A673 (cell line): ENCODE measurements at regions of chr1 and their contacts with region 1.

Region 1: DNA sequence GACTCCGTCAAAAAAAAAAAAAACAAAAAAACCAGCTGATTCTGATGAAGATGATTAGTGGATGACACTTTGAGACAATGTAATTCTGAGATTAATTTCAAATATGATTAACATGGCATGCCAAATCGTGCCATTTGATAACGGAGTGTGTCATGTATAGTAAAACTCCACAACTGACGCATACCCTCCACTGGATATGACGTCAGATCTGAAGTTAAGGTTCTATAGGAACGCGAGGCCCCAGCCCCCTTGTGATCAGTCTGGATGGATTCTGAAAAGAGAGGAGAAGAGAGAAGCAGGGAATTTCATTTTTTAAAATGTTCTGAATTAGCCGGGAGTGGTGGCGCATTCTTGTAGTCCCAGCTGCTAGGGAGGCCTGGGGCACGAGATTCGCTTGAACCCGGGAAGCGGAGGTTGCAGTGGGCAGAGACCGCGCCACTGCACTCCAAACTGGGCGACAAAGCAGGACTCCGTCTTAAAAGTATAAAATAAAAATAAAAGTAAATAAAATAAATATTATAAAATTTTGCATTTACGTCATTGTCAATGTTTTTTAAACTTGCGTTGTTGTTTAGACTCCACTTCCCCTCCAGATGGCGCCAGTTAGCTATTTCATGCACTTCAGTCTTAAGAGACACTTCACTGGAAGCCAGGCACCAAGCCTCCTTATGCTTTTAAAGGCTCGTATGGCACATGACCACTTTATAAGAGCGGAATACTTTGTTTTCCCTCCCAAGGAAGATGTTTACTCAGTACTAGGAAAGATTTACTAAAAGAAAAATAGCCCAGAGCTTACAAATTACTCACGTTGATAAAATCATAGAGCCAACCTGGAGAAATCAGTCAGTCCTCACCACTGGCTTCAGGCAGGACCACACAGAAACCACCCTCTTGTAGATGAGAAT is 65.5 kb downstream of the UBE2U start:
- DNase-seq: peak; percentile 95
- H3K4me3 ChIP-seq: no peak overlapping the region
- H3K27ac ChIP-seq: peak overlapping the region; percentile 82
- H3K4me1 ChIP-seq: peaks cover 34% of the 10 kb centered on the region
- H3K27me3 ChIP-seq: no peaks in the 10 kb centered on the region
- CTCF ChIP-seq: peak; percentile 76

Region 2: DNA sequence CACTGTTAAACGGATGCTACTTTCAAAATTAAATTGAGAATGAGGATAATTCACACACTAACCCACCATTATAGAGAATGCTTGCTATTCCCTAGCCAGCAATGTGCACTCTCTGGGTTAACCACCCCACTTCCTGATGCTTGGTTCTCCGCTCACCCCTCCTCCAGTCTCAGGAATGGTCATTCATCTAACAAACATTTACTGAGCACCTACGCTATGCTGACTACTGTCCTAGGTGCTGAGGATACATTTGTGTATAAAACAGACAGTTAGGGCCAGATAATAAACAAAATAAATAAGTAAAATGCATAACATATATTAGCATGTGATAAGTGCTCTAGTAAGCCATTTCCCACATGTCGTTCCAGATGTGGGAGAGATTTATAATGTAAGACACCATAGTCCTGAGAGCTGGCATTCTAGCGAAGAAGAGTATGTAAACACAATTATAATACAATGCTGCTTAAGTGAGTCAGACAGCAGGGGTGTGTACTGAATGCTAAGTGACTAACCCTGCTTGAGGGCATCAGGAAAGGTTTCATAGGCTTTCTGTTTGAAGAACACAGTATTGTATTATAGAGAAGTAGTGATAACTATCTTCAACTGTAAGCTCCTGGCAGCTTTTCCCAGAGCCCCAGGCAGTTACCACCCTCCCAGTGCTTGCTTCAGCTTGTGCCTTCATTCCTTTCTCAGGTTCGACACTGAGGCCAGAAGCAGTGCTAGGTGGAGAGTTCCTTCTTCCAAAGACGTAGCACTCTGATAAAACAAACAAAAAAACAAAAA is 74.4 kb after region 1 on chr1:
- CTCF ChIA-PET with region 1: interaction called, 16 read pairs
- POLR2A ChIA-PET with region 1: no interaction called
- intact Hi-C with region 1: no loop called
- DNase-seq: peak; percentile 80
- H3K4me3 ChIP-seq: no peak overlapping the region
- H3K27ac ChIP-seq: peak overlapping the region; percentile 24
- H3K4me1 ChIP-seq: peaks cover 38% of the 10 kb centered on the region
- H3K27me3 ChIP-seq: no peaks in the 10 kb centered on the region
- CTCF ChIP-seq: no peak

Region 3: GRCh38 chr1:64487061-64487460 is 218.2 kb after region 1 on chr1:
- CTCF ChIA-PET with region 1: no interaction called
- POLR2A ChIA-PET with region 1: no interaction called
- intact Hi-C with region 1: loop called (anchors 10 kb)
- DNase-seq: no peak
- H3K4me3 ChIP-seq: no peak overlapping the region
- H3K27ac ChIP-seq: no peak overlapping the region
- H3K4me1 ChIP-seq: peaks cover 67% of the 10 kb centered on the region
- H3K27me3 ChIP-seq: no peaks in the 10 kb centered on the region
- CTCF ChIP-seq: peak; percentile 44; the same call in 1 of the 2 replicates

Region 4: DNA sequence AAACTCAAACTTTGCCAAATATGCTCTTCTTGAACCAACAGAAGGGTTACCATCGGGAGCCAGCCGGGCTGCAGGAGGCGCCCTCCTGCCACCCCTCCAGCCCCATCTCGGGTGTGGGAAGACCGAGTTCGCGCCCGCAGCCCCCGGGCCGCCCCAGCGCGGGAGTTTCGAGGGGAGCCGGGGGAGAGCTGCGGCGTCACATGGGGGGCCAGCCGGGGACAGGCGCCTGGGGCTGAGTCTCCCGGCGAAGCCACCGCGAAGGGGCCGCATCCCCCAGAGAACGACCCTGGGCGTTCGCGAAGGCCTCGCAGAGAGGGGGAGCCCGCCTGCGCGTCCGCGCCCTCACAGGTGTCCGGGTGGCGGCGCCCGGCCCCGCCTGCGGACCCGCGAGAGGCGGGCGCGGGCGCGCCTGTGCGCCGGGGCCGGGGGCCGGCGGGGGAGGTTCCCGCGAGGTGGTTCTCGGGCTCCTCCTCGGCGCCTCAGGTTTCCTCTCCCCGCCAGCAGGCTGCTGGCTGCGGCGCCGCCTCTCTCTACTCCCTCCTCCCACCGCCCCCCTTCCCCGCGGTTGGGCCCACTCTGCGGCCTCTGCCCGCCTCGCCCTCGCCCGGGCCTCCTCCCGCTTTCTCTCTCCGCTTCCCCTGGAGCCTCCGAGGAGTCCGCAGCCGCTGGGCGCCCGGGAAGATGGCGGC is 475.7 kb after region 1 on chr1 and contains the start of gene RAVER2:
- CTCF ChIA-PET with region 1: no interaction called
- POLR2A ChIA-PET with region 1: no interaction called
- intact Hi-C with region 1: loop called (anchors 10 kb)
- DNase-seq: peak; percentile 91
- H3K4me3 ChIP-seq: peak within 1 kb of the TSS; percentile 98
- H3K27ac ChIP-seq: peak within 1 kb of the TSS; percentile 93
- H3K4me1 ChIP-seq: peaks cover 28% of the 10 kb centered on the region
- H3K27me3 ChIP-seq: no peaks in the 10 kb centered on the region
- CTCF ChIP-seq: peak; percentile 72
- total RNA-seq, gene RAVER2: 34.1 and 36.5 TPM in 2 replicates